Activated CD8-positive, alpha-beta T cell treated with anti-CD3 and anti-CD28 coated beads for 36 hours (primary cell): ENCODE measurements at regions of chr7 and their contacts with region 1.

Region 1: DNA sequence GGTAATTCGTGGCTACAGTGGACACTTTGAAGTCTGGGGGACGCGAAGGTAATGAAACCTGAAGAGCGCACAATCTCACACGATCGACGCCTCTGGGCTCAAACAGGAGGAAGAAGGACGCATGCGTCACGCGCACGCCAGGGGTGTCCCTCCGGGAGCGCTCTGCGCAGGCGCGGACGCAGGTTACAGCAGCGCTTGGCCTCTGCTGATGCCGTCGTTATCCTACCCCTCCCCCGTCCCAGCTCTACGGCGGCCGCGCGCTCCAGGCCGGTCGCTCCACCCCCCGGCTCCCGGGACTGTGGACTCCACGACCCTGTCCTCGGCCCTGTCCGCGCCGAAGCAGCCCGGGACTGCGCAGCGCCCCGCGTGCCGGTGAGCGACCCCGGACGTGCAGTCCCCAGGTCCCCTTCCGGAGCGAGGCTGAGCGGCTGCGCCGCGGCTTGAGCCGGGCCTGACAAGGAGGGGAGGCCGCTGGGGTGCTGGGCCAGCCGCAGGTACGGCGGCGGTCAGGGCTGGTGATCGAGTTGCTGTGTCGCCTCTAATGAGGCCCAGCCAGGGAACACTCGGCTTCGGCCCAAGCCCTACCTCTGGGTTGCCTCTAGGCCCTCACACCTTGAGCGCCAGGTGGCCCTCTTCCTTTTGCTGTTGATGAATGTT is at the start of gene TMEM106B:
- DNase-seq: peak; percentile 98
- ATAC-seq: peak; percentile 92
- H3K4me3 Mint-ChIP-seq: peak within 1 kb of the TSS; percentile 90
- H3K27ac Mint-ChIP-seq: peak within 1 kb of the TSS; percentile 96
- H3K4me1 Mint-ChIP-seq: peaks cover 32% of the 10 kb centered on the region
- H3K27me3 Mint-ChIP-seq: no peaks in the 10 kb centered on the region
- CTCF ChIP-seq: no peak
- total RNA-seq, gene TMEM106B: 27.1 to 28.8 TPM

Region 2: GRCh38 chr7:12257582-12257981 is 46.4 kb after region 1 on chr7:
- CTCF ChIA-PET with region 1: interaction called, 5 read pairs
- POLR2A ChIA-PET with region 1: interaction called, 11 read pairs
- intact Hi-C with region 1: loop called (anchors 1 kb)
- DNase-seq: peak; percentile 38
- ATAC-seq: peak; percentile 86
- H3K4me3 Mint-ChIP-seq: no peak overlapping the region
- H3K27ac Mint-ChIP-seq: no peak overlapping the region
- H3K4me1 Mint-ChIP-seq: peaks cover 11% of the 10 kb centered on the region
- H3K27me3 Mint-ChIP-seq: no peaks in the 10 kb centered on the region
- CTCF ChIP-seq: no peak

Region 3: GRCh38 chr7:12269100-12269895 is 58.1 kb after region 1 on chr7:
- CTCF ChIA-PET with region 1: no interaction called
- POLR2A ChIA-PET with region 1: no interaction called
- intact Hi-C with region 1: no loop called
- DNase-seq: no peak
- ATAC-seq: no peak
- H3K4me3 Mint-ChIP-seq: no peak overlapping the region
- H3K27ac Mint-ChIP-seq: no peak overlapping the region
- H3K4me1 Mint-ChIP-seq: no peaks in the 10 kb centered on the region
- H3K27me3 Mint-ChIP-seq: no peaks in the 10 kb centered on the region
- CTCF ChIP-seq: no peak